Lower lobe of right lung (tissue), 2 donors: ENCODE measurements at regions of chr1 and their contacts with region 1.

Region 1: DNA sequence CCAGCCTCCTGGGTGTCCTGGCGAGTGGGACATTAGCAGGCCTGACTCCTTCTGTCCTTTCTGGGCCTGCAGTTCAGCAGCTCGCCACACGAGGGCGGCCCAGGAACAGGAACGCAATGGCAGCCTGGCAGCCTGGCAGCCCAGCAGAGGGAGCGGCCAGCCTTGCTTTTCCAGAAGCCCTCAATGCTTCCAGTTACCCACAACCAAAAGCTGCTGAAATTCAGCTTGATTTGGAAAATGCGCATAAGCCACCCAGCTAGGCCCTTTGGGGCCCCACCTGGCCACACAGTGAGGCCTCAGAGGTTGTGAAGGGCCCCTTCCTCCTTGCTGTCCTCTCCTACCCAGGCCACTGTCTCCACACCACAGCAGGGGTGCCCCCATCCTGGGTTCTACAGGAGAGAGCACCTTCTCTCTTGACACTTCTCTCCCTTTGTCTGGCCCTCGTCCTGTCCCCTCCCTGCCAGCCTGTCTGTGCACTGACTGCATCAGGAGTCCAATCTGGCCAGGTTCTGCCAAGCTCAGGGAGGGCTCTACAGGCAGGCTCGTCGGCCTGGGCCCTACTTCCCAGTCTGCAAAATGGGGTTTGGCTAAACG is 103.4 kb upstream of the VAMP3 start:
- DNase-seq: peak; percentile 92
- ATAC-seq: peak; percentile 89 to 91
- H3K4me3 ChIP-seq: no peak overlapping the region
- H3K27ac ChIP-seq: no peak overlapping the region
- H3K4me1 ChIP-seq: peaks cover 7% of the 10 kb centered on the region
- H3K27me3 ChIP-seq: peaks cover 6% of the 10 kb centered on the region
- CTCF ChIP-seq: peak; percentile 100

Region 2: GRCh38 chr1:7334475-7335035 is 333.2 kb before region 1 on chr1:
- intact Hi-C with region 1: no loop called
- DNase-seq: no peak
- ATAC-seq: no peak
- H3K4me3 ChIP-seq: no peak overlapping the region
- H3K27ac ChIP-seq: no peak overlapping the region
- H3K4me1 ChIP-seq: peaks cover 13% of the 10 kb centered on the region
- H3K27me3 ChIP-seq: peaks cover under 1% of the 10 kb centered on the region
- CTCF ChIP-seq: no peak

Region 3: DNA sequence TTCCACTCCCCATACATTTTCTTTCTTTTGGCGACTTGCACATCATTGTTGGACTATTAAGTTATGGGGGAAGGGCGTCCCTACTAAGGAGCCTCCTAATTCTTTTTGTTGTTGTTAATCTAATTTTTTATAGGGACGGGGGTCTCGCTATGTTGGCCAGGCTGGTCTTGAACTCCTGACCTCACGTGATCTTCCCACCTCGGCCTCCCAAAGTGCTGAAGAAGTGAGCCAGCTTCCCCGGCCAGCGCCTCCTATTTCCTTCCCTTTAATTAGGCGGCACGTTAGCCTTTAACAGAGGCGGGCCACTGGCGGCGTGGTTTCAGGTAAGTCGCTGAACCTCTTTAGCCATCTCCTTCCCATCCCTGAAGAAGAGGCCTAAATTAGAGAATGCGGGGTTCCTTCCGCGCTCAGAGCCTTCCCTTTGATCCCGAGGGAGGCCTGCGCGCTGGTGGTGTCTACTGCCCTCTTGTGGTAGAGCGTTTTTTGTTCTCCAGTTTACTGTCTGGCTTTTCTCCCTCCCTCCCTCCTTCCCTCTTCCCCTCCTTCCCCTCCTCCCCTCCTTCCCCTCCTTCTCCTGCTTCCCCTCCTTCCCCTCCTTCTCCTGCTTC is 234.9 kb after region 1 on chr1:
- intact Hi-C with region 1: loop called (anchors 10 kb)
- DNase-seq: peak; percentile 64
- ATAC-seq: peak; percentile 86 to 94
- H3K4me3 ChIP-seq: peak overlapping the region; percentile 28
- H3K27ac ChIP-seq: no peak overlapping the region
- H3K4me1 ChIP-seq: peaks cover 6% of the 10 kb centered on the region
- H3K27me3 ChIP-seq: no peaks in the 10 kb centered on the region
- CTCF ChIP-seq: peak; percentile 59